Endothelial cell of umbilical vein (primary cell): ENCODE measurements at regions of chr4 and their contacts with region 1.

Region 1: DNA sequence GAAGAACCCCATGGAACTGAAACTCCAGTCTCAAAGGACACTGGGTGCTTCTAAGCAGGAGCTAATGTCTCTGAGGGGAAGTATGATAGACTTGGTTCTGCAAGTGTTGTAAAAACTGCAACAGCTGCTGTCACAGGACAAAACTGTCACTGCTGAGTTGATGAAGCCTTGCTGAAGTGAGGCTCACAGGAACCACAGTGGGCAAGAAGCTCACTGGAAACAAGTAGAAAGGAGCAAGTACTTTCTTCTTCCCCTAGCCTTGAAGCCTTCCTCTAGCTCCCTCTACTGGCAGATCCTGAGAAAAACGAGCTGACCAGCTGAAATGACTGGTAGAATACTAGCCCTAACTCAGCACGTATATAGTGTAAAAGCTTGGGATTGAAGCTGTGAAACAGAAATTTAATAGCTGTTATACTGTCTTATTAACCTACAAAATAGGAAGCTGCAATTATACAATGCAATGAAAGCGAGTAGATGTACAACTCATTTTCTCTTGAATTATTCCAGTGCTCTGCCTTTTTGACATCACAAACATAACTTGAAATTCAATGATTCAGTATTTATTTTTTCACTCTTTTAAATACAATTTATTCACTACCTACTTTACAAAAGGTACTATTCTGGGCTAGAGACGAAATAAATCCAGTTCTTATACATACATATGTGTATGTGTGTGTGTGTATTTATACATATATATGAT is 91.4 kb downstream of the GABRB1 start:
- DNase-seq: peak; percentile 74
- H3K4me3 ChIP-seq: no peak overlapping the region
- H3K27ac ChIP-seq: no peak overlapping the region
- H3K4me1 ChIP-seq: no peaks in the 10 kb centered on the region
- H3K27me3 ChIP-seq: no peaks in the 10 kb centered on the region
- CTCF ChIP-seq: peak; percentile 79 to 85
- POLR2A ChIP-seq: no peak

Region 2: GRCh38 chr4:46931981-46932380 is 190.8 kb before region 1 on chr4:
- CTCF ChIA-PET with region 1: interaction called, 110 read pairs
- POLR2A ChIA-PET with region 1: no interaction called
- dilution Hi-C with region 1: no loop called
- intact Hi-C with region 1: loop called (anchors 1 kb)
- DNase-seq: peak; percentile 35
- H3K4me3 ChIP-seq: no peak overlapping the region
- H3K27ac ChIP-seq: no peak overlapping the region
- H3K4me1 ChIP-seq: no peaks in the 10 kb centered on the region
- H3K27me3 ChIP-seq: peaks cover 0 to 9% of the 10 kb centered on the region in 2 experiments
- CTCF ChIP-seq: peak; percentile 47 to 65
- POLR2A ChIP-seq: no peak

Region 3: DNA sequence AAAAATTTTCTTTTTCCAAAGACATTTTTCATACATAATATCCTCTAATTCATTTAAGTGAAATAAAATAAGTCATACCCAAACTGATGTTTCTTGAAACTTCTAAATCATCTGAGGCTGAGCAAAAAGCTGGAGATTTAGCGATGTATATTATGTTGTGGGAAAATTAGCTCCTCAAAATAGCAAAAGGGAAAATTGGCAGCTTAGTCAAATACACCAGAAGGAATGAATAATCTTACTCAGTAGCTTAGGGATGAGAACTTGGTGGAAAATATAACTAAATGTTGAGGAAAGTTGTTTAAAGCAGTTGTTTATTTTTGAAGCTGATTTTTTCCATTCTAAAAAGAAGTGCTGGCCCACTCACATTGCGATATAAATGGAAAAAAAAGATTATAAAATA is 170.3 kb before region 1 on chr4:
- CTCF ChIA-PET with region 1: interaction called, 12 read pairs
- POLR2A ChIA-PET with region 1: no interaction called
- dilution Hi-C with region 1: no loop called
- intact Hi-C with region 1: no loop called
- DNase-seq: no peak
- H3K4me3 ChIP-seq: no peak overlapping the region
- H3K27ac ChIP-seq: no peak overlapping the region
- H3K4me1 ChIP-seq: no peaks in the 10 kb centered on the region
- H3K27me3 ChIP-seq: peaks cover 0 to 2% of the 10 kb centered on the region in 2 experiments
- CTCF ChIP-seq: no peak
- POLR2A ChIP-seq: no peak

Region 4: GRCh38 chr4:47075241-47075640 is 47.5 kb before region 1 on chr4:
- CTCF ChIA-PET with region 1: interaction called, 10 read pairs
- POLR2A ChIA-PET with region 1: no interaction called
- dilution Hi-C with region 1: no loop called
- intact Hi-C with region 1: no loop called
- DNase-seq: peak; percentile 54
- H3K4me3 ChIP-seq: no peak overlapping the region
- H3K27ac ChIP-seq: peak overlapping the region; percentile 51
- H3K4me1 ChIP-seq: peaks cover 37% of the 10 kb centered on the region
- H3K27me3 ChIP-seq: no peaks in the 10 kb centered on the region
- CTCF ChIP-seq: no peak
- POLR2A ChIP-seq: no peak

Region 5: GRCh38 chr4:47109379-47109778 is 13.4 kb before region 1 on chr4:
- CTCF ChIA-PET with region 1: interaction called, 28 read pairs
- POLR2A ChIA-PET with region 1: no interaction called
- dilution Hi-C with region 1: no loop called
- intact Hi-C with region 1: no loop called
- DNase-seq: no peak
- H3K4me3 ChIP-seq: no peak overlapping the region
- H3K27ac ChIP-seq: no peak overlapping the region
- H3K4me1 ChIP-seq: no peaks in the 10 kb centered on the region
- H3K27me3 ChIP-seq: peaks cover 0 to 4% of the 10 kb centered on the region in 2 experiments
- CTCF ChIP-seq: no peak
- POLR2A ChIP-seq: no peak

Region 6: DNA sequence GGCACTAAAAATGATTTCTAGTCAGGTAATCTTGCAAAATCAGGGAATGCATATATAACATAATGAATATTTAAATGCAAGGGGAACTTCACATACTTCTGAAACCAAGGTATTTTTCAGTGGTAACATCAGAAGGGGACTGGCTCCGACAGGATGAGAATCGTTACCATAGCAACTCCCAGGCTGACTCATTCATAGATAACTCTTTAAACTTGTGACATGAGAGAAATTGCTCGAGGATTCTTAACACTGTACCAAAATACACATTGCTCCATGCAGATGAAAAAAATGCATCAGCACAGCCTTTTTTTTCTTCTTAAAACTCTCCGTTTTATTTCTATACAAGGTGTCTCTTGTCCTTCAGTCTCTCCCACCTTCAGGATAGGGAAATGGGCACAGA is 22.9 kb after region 1 on chr4:
- CTCF ChIA-PET with region 1: interaction called, 20 read pairs
- POLR2A ChIA-PET with region 1: no interaction called
- dilution Hi-C with region 1: no loop called
- intact Hi-C with region 1: no loop called
- DNase-seq: peak; percentile 2
- H3K4me3 ChIP-seq: no peak overlapping the region
- H3K27ac ChIP-seq: no peak overlapping the region
- H3K4me1 ChIP-seq: no peaks in the 10 kb centered on the region
- H3K27me3 ChIP-seq: no peaks in the 10 kb centered on the region
- CTCF ChIP-seq: no peak
- POLR2A ChIP-seq: no peak

Region 7: DNA sequence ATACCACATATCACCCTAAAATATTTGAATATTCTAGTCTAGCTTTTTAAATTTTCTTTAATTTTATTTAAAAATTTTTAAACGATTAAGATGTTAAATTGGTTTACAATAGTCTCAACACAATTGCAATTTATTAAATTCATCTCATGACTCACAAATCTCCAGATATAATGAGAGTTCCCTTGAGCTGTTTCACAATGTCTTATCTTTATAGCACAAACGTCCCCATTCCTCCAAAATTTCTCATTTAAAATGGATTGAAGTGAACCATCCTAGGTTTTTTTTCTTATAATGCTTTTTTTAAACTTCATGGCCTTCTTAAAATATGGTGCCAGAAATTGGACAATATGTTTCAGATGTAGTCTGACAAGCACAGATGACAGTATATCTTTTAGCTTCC is 113.0 kb after region 1 on chr4:
- CTCF ChIA-PET with region 1: no interaction called
- POLR2A ChIA-PET with region 1: no interaction called
- dilution Hi-C with region 1: no loop called
- intact Hi-C with region 1: no loop called
- DNase-seq: no peak
- H3K4me3 ChIP-seq: no peak overlapping the region
- H3K27ac ChIP-seq: no peak overlapping the region
- H3K4me1 ChIP-seq: no peaks in the 10 kb centered on the region
- H3K27me3 ChIP-seq: no peaks in the 10 kb centered on the region
- CTCF ChIP-seq: no peak
- POLR2A ChIP-seq: no peak